SK-N-SH (cell line): ENCODE measurements at regions of chr12 and their contacts with region 1.

Region 1: DNA sequence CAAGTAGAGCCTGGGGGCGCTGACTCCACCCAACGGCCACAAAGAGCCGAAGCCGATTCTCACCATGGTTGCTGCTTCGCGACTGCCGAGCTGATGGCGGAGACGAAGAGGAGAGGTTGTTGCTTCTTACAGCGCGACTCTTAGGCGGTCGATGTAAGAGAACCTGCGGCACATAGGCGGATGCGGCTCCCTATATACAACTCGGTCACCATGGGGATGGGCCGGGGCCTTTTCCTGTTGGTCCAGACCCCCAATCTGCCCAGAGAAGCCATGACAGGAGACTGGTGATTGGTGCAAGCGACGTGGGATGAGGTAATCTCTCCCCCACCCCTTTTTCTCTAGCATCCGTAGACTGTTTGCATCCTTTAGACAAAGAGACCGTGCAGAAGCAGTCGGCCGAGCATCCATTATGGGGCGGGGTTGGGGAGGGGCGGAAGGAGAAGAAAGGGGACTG is at the start of gene TUBA1A:
- DNase-seq: peak; percentile 93
- H3K4me3 ChIP-seq: peak within 1 kb of the TSS; percentile 91 to 94
- H3K27ac ChIP-seq: peak within 1 kb of the TSS; percentile 98
- H3K4me1 ChIP-seq: peaks cover 6 to 28% of the 10 kb centered on the region in 2 experiments; a peak in 2 of 4 replicates
- H3K27me3 ChIP-seq: no peaks in the 10 kb centered on the region
- CTCF ChIP-seq: no peak
- EP300 ChIP-seq: peak; percentile 16 to 63; a peak in 3 of 4 replicates
- RAD21 ChIP-seq: no peak
- polyA plus RNA-seq, gene TUBA1A: 1,427 and 1,906 TPM in 2 replicates

Region 2: GRCh38 chr12:49200919-49201594 is 12.1 kb after region 1 on chr12:
- CTCF ChIA-PET with region 1: interaction called, 27 read pairs
- POLR2A ChIA-PET with region 1: interaction called, 14 read pairs
- DNase-seq: peak; percentile 34
- H3K4me3 ChIP-seq: peak overlapping the region; percentile 14 to 43; a peak in 2 of 4 replicates
- H3K27ac ChIP-seq: peak overlapping the region; percentile 90 to 100
- H3K4me1 ChIP-seq: peaks cover 5 to 34% of the 10 kb centered on the region in 2 experiments
- H3K27me3 ChIP-seq: no peaks in the 10 kb centered on the region
- CTCF ChIP-seq: no peak
- EP300 ChIP-seq: peak in 1 of 2 experiments; percentile 67; a peak in 1 of 4 replicates
- RAD21 ChIP-seq: no peak

Region 3: DNA sequence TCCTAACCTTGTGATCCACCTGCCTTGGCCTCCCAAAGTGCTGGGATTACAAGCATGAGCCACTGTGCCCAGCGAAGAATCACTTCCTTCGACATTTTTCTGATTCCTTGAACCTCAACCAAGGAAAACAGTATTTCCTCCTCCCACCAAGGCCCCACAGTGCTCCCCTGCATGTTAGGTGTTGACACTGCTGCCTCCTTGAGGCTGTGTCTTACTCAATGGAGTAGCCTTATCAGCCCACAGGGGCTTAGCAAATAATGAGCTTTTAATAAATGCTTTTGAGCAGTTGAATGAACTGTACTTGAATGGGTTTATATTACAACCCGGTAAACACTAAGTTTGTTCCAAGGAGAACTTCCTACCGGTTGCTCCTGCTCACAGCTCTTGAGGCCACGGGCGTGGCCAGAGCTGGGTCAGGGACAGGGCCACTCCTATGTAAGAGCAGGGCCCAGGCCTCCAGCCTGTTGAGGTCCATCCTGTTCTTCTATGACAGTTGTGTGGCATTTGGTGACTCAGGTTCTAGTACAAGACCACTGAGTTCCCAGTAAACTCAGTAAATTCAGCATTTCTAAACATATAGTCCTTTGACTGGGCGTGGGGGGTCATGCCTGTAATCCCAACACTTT is 36.7 kb after region 1 on chr12:
- CTCF ChIA-PET with region 1: interaction called, 79 read pairs
- POLR2A ChIA-PET with region 1: interaction called, 18 read pairs
- DNase-seq: no peak
- H3K4me3 ChIP-seq: no peak overlapping the region
- H3K27ac ChIP-seq: no peak overlapping the region
- H3K4me1 ChIP-seq: peaks cover 10 to 11% of the 10 kb centered on the region in 2 experiments; a peak in 2 of 4 replicates
- H3K27me3 ChIP-seq: no peaks in the 10 kb centered on the region
- CTCF ChIP-seq: peak; percentile 39
- EP300 ChIP-seq: no peak
- RAD21 ChIP-seq: peak; percentile 30; the same call in 1 of the 2 replicates

Region 4: DNA sequence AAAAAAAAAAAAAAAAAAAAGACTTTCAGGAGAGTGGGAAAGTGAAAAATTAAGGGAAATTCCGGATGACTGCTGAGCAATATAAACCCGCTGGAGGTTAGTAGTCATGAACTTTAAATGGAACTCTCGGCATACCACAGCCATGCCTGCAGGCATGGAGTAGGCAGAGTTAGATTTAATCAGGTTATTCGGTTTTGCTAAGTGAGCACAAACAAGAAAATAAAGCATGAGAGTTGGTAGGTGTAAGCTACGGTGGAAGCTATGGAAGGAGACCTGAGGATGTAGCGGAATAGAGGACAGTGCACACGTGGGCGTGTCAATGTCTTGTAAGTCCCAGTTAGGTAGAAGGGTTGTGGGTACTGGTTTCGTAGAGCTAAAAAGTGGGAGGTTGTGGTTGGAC is 64.1 kb after region 1 on chr12:
- CTCF ChIA-PET with region 1: no interaction called
- POLR2A ChIA-PET with region 1: no interaction called
- DNase-seq: no peak
- H3K4me3 ChIP-seq: no peak overlapping the region
- H3K27ac ChIP-seq: no peak overlapping the region
- H3K4me1 ChIP-seq: no peaks in the 10 kb centered on the region; a peak in 1 of 4 replicates
- H3K27me3 ChIP-seq: no peaks in the 10 kb centered on the region
- CTCF ChIP-seq: no peak
- EP300 ChIP-seq: no peak
- RAD21 ChIP-seq: no peak